ENCODE measurements at regions of chr13 and their contacts with region 1.

Region 1: GRCh38 chr13:110715395-110716235 is 2.1 kb downstream of the ING1 start:
- DNase-seq: peak; percentile 96
- H3K4me3 Mint-ChIP-seq: peak overlapping the region; percentile 89
- H3K27ac Mint-ChIP-seq: peak overlapping the region; percentile 93
- H3K4me1 Mint-ChIP-seq: peaks cover 32% of the 10 kb centered on the region
- H3K27me3 Mint-ChIP-seq: no peaks in the 10 kb centered on the region

Region 2: GRCh38 chr13:110615322-110616102 is 100.1 kb before region 1 on chr13 and contains the start of gene NAXD:
- CTCF ChIA-PET with region 1: no interaction called
- POLR2A ChIA-PET with region 1: interaction called, 45 read pairs
- DNase-seq: peak; percentile 84
- H3K4me3 Mint-ChIP-seq: peak within 1 kb of the TSS; percentile 93
- H3K27ac Mint-ChIP-seq: peak within 1 kb of the TSS; percentile 87
- H3K4me1 Mint-ChIP-seq: peaks cover 40% of the 10 kb centered on the region
- H3K27me3 Mint-ChIP-seq: no peaks in the 10 kb centered on the region
- total RNA-seq, gene NAXD: 29.6 to 30.8 TPM

Region 3: DNA sequence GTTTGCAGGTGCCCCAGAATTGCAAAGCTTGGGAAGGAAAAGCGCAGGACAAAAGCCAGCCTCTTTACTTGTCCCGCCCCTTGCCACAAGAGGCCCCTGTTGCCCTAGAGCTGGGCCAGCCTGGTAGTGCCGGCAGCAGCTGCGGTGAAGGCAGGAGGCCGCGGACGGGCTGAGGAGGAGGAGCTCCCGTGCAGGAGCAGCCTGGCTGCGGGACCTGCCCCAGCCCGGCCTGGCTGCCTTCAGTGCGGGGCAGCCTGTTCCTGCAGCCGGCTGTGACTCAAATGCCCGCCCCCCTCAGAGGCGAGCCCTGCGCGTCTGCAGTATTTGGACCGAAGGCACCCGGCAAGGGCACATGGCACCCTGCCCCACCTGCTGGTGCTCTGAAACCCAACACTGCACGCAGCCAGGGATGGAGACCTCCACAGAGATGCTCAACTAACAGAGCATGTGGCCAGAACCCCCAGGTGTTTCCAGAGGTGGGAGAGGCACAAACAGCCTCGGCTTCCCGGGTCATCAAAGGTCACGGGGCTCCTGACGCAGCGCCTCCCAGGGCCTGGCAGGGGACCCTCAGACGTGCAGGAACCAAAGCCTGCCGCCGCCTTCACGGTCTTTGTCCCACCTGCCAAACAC is 70.6 kb before region 1 on chr13:
- CTCF ChIA-PET with region 1: no interaction called
- POLR2A ChIA-PET with region 1: interaction called, 10 read pairs
- DNase-seq: peak; percentile 64
- H3K4me3 Mint-ChIP-seq: no peak overlapping the region
- H3K27ac Mint-ChIP-seq: no peak overlapping the region
- H3K4me1 Mint-ChIP-seq: peaks cover 3% of the 10 kb centered on the region
- H3K27me3 Mint-ChIP-seq: no peaks in the 10 kb centered on the region

Region 4: GRCh38 chr13:110680851-110681250 is 34.8 kb before region 1 on chr13:
- CTCF ChIA-PET with region 1: interaction called, 6 read pairs
- POLR2A ChIA-PET with region 1: interaction called, 11 read pairs
- DNase-seq: no peak
- H3K4me3 Mint-ChIP-seq: no peak overlapping the region
- H3K27ac Mint-ChIP-seq: no peak overlapping the region
- H3K4me1 Mint-ChIP-seq: peaks cover 10% of the 10 kb centered on the region
- H3K27me3 Mint-ChIP-seq: no peaks in the 10 kb centered on the region

Region 5: GRCh38 chr13:110726726-110727125 is 11.1 kb after region 1 on chr13:
- CTCF ChIA-PET with region 1: interaction called, 3 read pairs
- POLR2A ChIA-PET with region 1: interaction called, 17 read pairs
- DNase-seq: peak; percentile 83
- H3K4me3 Mint-ChIP-seq: peak overlapping the region; percentile 48
- H3K27ac Mint-ChIP-seq: peak overlapping the region; percentile 85
- H3K4me1 Mint-ChIP-seq: peaks cover 28% of the 10 kb centered on the region
- H3K27me3 Mint-ChIP-seq: no peaks in the 10 kb centered on the region

Region 6: DNA sequence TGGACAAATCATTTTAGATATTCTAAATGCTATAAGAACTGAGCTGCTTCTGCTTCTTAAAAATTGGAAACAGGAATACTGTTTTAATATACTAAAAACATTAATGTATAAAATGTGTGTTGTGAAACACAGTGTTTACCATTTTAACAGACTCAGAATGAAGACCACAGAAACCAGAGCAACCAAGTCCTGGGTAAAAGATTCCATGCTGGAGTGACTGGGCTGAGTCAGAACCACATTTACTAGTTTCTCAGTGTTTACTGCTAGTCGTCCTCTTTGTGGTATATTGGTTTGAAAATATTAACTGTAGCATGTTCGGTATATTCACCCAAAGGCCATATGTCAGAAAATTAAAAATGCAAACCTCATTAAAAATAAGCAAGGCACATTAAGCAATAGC is 167.4 kb after region 1 on chr13:
- CTCF ChIA-PET with region 1: no interaction called
- POLR2A ChIA-PET with region 1: no interaction called
- DNase-seq: no peak
- H3K4me3 Mint-ChIP-seq: no peak overlapping the region
- H3K27ac Mint-ChIP-seq: no peak overlapping the region
- H3K4me1 Mint-ChIP-seq: peaks cover 20% of the 10 kb centered on the region
- H3K27me3 Mint-ChIP-seq: no peaks in the 10 kb centered on the region

Region 7: GRCh38 chr13:111017755-111018459 is 302.3 kb after region 1 on chr13:
- CTCF ChIA-PET with region 1: no interaction called
- POLR2A ChIA-PET with region 1: no interaction called
- DNase-seq: no peak
- H3K4me3 Mint-ChIP-seq: no peak overlapping the region
- H3K27ac Mint-ChIP-seq: no peak overlapping the region
- H3K4me1 Mint-ChIP-seq: peaks cover 19% of the 10 kb centered on the region
- H3K27me3 Mint-ChIP-seq: peaks cover 17% of the 10 kb centered on the region

Measured in activated CD4-positive, alpha-beta memory T cell treated with anti-CD3 and anti-CD28 coated beads, Interleukin-2, amount 10 ng/mL, durations not matched to agents 7 days and 5 days (primary cell).